Caco-2 (cell line): ENCODE measurements at regions of chr1 and their contacts with region 1.

Region 1: DNA sequence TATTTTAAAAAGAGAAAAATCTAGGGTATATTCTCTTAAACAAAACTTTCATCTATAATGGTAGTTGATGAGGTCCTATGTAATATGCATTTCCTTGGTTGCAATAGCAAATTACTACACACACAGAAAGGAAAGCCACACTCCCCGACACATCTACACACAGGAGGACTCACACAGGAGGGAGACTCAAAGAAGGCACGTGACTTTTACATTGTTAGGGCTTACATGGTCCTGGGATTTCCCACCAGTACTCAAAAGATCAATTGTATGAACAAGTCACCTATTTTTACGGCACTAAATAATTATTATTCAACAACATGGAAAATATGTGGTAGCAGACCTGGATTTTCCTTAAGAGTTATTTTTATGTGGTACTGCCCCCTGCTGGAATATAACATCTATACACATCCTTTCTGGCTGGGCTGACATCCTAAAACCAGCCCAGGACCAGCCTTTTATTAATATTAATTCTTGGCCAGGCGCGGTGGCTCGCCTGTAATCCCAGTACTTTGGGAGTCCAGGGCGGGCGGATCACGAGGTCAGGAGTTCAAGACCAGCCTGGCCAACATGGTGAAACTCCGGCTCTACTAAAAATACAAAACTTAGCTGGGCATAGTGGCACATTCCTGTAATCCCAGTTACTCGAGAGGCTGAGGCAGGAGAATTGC is 33.9 kb upstream of the LGALS8 start:
- DNase-seq: peak in 1 of 2 experiments; percentile 37
- H3K4me3 ChIP-seq: no peak overlapping the region
- H3K4me3 Mint-ChIP-seq: no peak overlapping the region
- H3K27ac Mint-ChIP-seq: peak overlapping the region; percentile 34
- H3K4me1 ChIP-seq: peaks cover 53% of the 10 kb centered on the region
- H3K4me1 Mint-ChIP-seq: peaks cover 49% of the 10 kb centered on the region
- H3K27me3 ChIP-seq: no peaks in the 10 kb centered on the region
- H3K27me3 Mint-ChIP-seq: no peaks in the 10 kb centered on the region
- CTCF ChIP-seq: peak; percentile 42 to 51

Region 2: GRCh38 chr1:236438614-236439013 is 51.2 kb before region 1 on chr1:
- CTCF ChIA-PET with region 1: no interaction called
- POLR2A ChIA-PET with region 1: no interaction called
- intact Hi-C with region 1: loop called (anchors 5 kb)
- DNase-seq: no peak
- H3K4me3 ChIP-seq: no peak overlapping the region
- H3K4me3 Mint-ChIP-seq: no peak overlapping the region
- H3K27ac Mint-ChIP-seq: no peak overlapping the region
- H3K4me1 ChIP-seq: peaks cover 10% of the 10 kb centered on the region
- H3K4me1 Mint-ChIP-seq: peaks cover 8% of the 10 kb centered on the region
- H3K27me3 ChIP-seq: no peaks in the 10 kb centered on the region; the same call in 1 of the 2 replicates
- H3K27me3 Mint-ChIP-seq: no peaks in the 10 kb centered on the region
- CTCF ChIP-seq: no peak

Region 3: DNA sequence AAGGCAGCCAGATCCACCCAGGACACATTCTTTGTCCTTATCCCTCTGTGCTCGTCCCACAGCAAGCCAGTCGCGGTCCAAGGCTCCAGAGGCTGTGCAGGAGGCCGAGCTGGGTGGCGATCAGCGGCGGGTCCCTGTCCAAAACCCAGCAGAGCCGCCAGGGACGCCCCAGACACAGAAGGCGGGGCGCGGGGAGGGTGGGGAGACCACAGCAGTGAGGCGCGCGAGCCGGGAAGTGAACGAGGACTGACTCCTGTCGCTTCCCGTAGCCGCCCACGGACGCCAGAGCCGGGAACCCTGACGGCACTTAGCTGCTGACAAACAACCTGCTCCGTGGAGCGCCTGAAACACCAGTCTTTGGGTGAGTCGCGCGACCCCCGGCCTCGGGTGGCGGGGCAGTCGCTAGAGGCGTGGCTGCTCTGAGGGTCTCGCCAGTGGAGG is 33.9 kb after region 1 on chr1 and contains the start of gene LGALS8:
- CTCF ChIA-PET with region 1: no interaction called
- POLR2A ChIA-PET with region 1: no interaction called
- intact Hi-C with region 1: loop called (anchors 1 kb)
- DNase-seq: peak; percentile 74 to 79
- H3K4me3 ChIP-seq: peak within 1 kb of the TSS; percentile 98
- H3K4me3 Mint-ChIP-seq: peak within 1 kb of the TSS; percentile 98
- H3K27ac Mint-ChIP-seq: peak within 1 kb of the TSS; percentile 98
- H3K4me1 ChIP-seq: peaks cover 8% of the 10 kb centered on the region
- H3K4me1 Mint-ChIP-seq: peaks cover 26% of the 10 kb centered on the region
- H3K27me3 ChIP-seq: no peaks in the 10 kb centered on the region
- H3K27me3 Mint-ChIP-seq: no peaks in the 10 kb centered on the region
- CTCF ChIP-seq: no peak
- total RNA-seq, gene LGALS8: 67.4 and 72.3 TPM in 2 replicates

Region 4: GRCh38 chr1:236534151-236534651 is 44.4 kb after region 1 on chr1:
- CTCF ChIA-PET with region 1: no interaction called
- POLR2A ChIA-PET with region 1: no interaction called
- intact Hi-C with region 1: loop called (anchors 1 kb)
- DNase-seq: no peak
- H3K4me3 ChIP-seq: no peak overlapping the region
- H3K4me3 Mint-ChIP-seq: no peak overlapping the region
- H3K27ac Mint-ChIP-seq: no peak overlapping the region
- H3K4me1 ChIP-seq: peaks cover 14% of the 10 kb centered on the region; the same call in 1 of the 2 replicates
- H3K4me1 Mint-ChIP-seq: peaks cover 13% of the 10 kb centered on the region
- H3K27me3 ChIP-seq: no peaks in the 10 kb centered on the region
- H3K27me3 Mint-ChIP-seq: no peaks in the 10 kb centered on the region
- CTCF ChIP-seq: no peak

Region 5: DNA sequence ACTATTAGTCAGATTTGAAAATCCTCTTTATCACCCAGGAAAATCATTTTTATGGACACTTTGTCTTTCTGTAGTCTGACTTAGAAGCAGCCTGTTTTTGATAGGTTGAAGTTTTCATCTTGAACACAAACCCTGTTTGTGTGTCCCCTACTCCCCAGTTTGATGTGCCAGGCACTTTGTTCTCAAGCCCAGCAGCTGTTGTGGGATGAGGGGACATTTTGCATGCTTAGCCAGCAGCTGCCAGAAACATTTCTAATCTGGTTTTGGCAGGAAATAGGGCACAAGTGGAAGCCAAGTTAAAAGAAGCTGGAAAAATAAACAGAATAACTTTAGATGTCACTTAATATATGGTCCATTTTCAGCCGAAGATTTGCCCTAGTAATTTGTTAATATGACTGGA is 226.3 kb after region 1 on chr1:
- CTCF ChIA-PET with region 1: no interaction called
- POLR2A ChIA-PET with region 1: no interaction called
- intact Hi-C with region 1: no loop called
- DNase-seq: no peak
- H3K4me3 ChIP-seq: no peak overlapping the region
- H3K4me3 Mint-ChIP-seq: no peak overlapping the region
- H3K27ac Mint-ChIP-seq: no peak overlapping the region
- H3K4me1 ChIP-seq: no peaks in the 10 kb centered on the region
- H3K4me1 Mint-ChIP-seq: peaks cover 7% of the 10 kb centered on the region
- H3K27me3 ChIP-seq: no peaks in the 10 kb centered on the region; the same call in 1 of the 2 replicates
- H3K27me3 Mint-ChIP-seq: peaks cover 2% of the 10 kb centered on the region
- CTCF ChIP-seq: no peak